ENCODE measurements at regions of chr2 and their contacts with region 1.

Region 1: DNA sequence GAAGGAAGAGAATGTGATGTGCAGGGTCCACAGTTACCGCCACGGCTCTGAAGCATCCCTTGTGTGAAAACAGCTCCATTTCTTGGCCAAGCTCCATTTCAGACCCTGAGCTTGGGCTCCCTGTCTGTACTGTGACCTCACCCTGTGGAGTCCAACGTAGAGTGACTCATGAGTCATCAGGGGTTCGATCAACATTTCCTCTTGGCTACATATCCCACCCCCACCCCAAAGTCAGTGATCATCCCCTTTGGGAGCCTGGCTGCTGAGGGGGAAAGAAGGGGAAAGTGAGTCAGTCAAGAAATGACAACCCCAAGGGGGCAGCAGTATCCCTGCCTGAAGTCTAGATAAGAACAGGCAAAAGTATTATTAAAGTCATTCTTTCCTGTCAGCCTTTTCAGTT is 62.2 kb downstream of the PAPOLG start:
- DNase-seq: peak in 2 of 9 donors; percentile 29 to 53
- ATAC-seq: no peak
- H3K4me3 ChIP-seq: no peak overlapping the region
- H3K4me3 Mint-ChIP-seq: peak overlapping the region in 2 of 10 donors; percentile 5 to 34
- H3K27ac ChIP-seq: no peak overlapping the region
- H3K27ac Mint-ChIP-seq: peak overlapping the region in 7 of 9 donors; percentile 28 to 92 (median 61)
- H3K4me1 ChIP-seq: peaks cover 24% of the 10 kb centered on the region in 2 donors
- H3K4me1 Mint-ChIP-seq: peaks cover 22 to 46% (median 37%) of the 10 kb centered on the region in 7 donors
- H3K27me3 ChIP-seq: no peaks in the 10 kb centered on the region
- H3K27me3 Mint-ChIP-seq: peaks cover 0 to 3% (median 0%) of the 10 kb centered on the region in 5 donors

Region 2: GRCh38 chr2:60794277-60794863 is 23.9 kb before region 1 on chr2:
- CTCF ChIA-PET with region 1: no interaction called
- POLR2A ChIA-PET with region 1: no interaction called
- intact Hi-C with region 1: loop called in 1 of 2 experiments (anchors 1 kb)
- DNase-seq: peak in 4 of 9 donors; percentile 20 to 44 (median 27)
- ATAC-seq: peak; percentile 64
- H3K4me3 ChIP-seq: no peak overlapping the region
- H3K4me3 Mint-ChIP-seq: no peak overlapping the region
- H3K27ac ChIP-seq: no peak overlapping the region
- H3K27ac Mint-ChIP-seq: peak overlapping the region in 2 of 9 donors; percentile 2 to 42
- H3K4me1 ChIP-seq: peaks cover 0 to 7% of the 10 kb centered on the region in 2 donors
- H3K4me1 Mint-ChIP-seq: peaks cover 0 to 16% (median 2%) of the 10 kb centered on the region in 7 donors
- H3K27me3 ChIP-seq: no peaks in the 10 kb centered on the region
- H3K27me3 Mint-ChIP-seq: no peaks in the 10 kb centered on the region

Region 3: DNA sequence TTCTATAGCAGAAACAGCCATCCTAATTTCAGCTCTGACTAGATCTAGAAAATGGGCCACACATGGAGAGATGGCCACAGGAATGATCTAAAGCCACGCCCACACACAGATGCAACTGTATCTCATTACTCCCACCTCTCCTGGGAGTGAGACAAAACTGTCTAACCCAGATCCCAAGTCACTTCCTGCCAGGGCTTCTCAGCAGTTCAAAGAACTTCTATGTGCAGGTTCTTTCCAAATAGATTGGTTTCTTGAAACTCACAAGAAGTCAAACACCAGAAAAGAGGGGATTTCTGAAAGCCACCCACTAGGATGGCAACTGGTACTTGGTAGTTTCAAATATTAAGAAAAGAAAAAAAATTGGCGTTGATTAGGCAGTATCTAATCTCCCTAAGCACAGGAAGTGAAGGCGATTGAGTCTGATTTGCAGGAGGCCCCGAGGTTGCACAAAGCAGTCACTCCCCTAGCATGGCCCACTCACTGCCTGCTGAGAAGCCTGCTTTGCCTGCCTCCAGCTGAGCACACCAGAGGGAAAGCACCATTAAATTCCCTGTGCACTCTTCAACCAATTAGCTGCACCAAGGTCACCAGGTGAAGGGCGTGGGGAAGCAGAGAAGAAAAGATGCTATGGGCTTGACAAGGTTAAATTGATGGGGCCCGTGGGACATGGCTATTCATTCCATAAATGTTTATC is 11.1 kb before region 1 on chr2:
- CTCF ChIA-PET with region 1: interaction called, 7 read pairs
- POLR2A ChIA-PET with region 1: interaction called, 7 read pairs
- intact Hi-C with region 1: loop called (anchors 1 kb)
- DNase-seq: peak in 5 of 9 donors; percentile 15 to 53 (median 20)
- ATAC-seq: peak; percentile 65
- H3K4me3 ChIP-seq: no peak overlapping the region
- H3K4me3 Mint-ChIP-seq: peak overlapping the region; percentile 15 to 73 (median 52)
- H3K27ac ChIP-seq: peak overlapping the region; percentile 57
- H3K27ac Mint-ChIP-seq: peak overlapping the region; percentile 7 to 88 (median 73)
- H3K4me1 ChIP-seq: peaks cover 19 to 23% of the 10 kb centered on the region in 2 donors
- H3K4me1 Mint-ChIP-seq: peaks cover 28 to 51% (median 44%) of the 10 kb centered on the region in 7 donors
- H3K27me3 ChIP-seq: no peaks in the 10 kb centered on the region
- H3K27me3 Mint-ChIP-seq: no peaks in the 10 kb centered on the region

Region 4: DNA sequence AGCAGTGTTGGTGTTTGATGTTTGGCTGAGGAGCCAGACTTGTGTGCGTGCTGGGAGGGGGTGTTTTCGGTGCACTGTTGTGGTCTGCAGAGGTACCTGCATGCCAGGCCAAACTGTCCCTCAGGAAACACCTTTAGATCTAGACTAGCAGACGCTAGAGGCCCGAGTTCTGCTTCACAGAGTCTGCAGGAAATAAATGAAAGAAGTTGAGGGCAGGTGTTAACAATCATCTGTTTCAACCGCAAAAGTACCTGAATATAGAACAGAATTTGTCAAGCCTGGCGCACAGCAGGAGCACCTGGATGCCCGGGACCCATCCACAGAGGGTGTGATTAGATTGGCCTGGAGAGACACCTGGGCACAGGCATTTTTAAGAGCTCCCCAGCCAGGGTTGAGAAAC is 22.6 kb after region 1 on chr2:
- CTCF ChIA-PET with region 1: interaction called, 3 read pairs
- POLR2A ChIA-PET with region 1: interaction called, 4 read pairs
- intact Hi-C with region 1: loop called in 1 of 2 experiments (anchors 1 kb)
- DNase-seq: peak in 3 of 9 donors; percentile 4 to 12 (median 12)
- ATAC-seq: peak; percentile 65
- H3K4me3 ChIP-seq: no peak overlapping the region
- H3K4me3 Mint-ChIP-seq: peak overlapping the region in 5 of 10 donors; percentile 11 to 57 (median 36)
- H3K27ac ChIP-seq: no peak overlapping the region
- H3K27ac Mint-ChIP-seq: peak overlapping the region in 6 of 9 donors; percentile 30 to 73 (median 57)
- H3K4me1 ChIP-seq: peaks cover 10% of the 10 kb centered on the region in 2 donors
- H3K4me1 Mint-ChIP-seq: peaks cover 10 to 23% (median 12%) of the 10 kb centered on the region in 7 donors
- H3K27me3 ChIP-seq: no peaks in the 10 kb centered on the region
- H3K27me3 Mint-ChIP-seq: no peaks in the 10 kb centered on the region

Region 5: GRCh38 chr2:60867848-60868247 is 49.6 kb after region 1 on chr2:
- CTCF ChIA-PET with region 1: no interaction called
- POLR2A ChIA-PET with region 1: interaction called, 3 read pairs
- intact Hi-C with region 1: loop called (anchors 1 kb)
- DNase-seq: peak in 7 of 9 donors; percentile 22 to 68 (median 51)
- ATAC-seq: peak; percentile 92
- H3K4me3 ChIP-seq: no peak overlapping the region
- H3K4me3 Mint-ChIP-seq: peak overlapping the region; percentile 36 to 81 (median 65)
- H3K27ac ChIP-seq: no peak overlapping the region
- H3K27ac Mint-ChIP-seq: peak overlapping the region; percentile 51 to 94 (median 85)
- H3K4me1 ChIP-seq: peaks cover 12 to 13% of the 10 kb centered on the region in 2 donors
- H3K4me1 Mint-ChIP-seq: peaks cover 17 to 25% (median 22%) of the 10 kb centered on the region in 7 donors
- H3K27me3 ChIP-seq: no peaks in the 10 kb centered on the region
- H3K27me3 Mint-ChIP-seq: no peaks in the 10 kb centered on the region

Region 6: DNA sequence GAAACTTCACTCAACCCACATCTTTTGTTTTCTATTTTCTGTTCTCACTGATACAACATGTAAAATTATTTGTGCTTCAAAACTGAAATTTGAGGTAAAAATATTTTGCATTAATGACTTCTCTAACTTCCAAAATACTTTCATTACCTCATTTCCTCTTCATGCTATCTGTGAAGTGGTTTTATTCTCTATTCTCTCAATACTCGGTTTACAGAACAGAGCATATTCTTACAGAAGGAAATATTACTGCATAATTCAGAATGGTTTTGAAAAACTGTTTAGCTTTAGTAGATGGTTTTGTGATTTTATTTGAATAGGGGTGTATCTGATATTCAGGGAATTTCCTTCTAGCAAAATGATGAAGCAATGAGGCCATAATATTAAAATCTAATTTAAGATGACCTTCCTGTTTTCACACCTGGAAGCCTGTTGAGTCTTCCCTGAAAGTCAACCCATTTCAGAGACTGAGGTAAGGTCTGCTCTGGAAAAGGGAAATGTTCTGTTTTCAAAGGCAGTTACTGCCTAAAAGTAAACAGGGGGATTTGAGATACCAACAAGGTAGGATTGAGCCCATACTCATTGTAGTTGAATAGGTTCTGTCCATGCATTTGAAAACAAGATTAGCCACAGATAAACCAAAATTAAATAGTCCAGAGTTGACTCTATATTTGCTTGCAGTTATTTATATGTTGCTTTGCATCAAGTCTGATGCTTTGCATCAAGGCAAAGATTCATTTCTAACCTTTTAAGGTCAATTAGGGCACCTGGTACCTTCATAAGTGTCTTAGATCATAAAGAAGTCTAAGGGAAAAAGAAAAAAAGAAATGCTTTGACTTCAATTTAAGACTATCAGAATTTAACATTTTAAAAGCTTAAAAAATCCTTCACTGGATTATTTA is 148.5 kb after region 1 on chr2:
- CTCF ChIA-PET with region 1: no interaction called
- POLR2A ChIA-PET with region 1: no interaction called
- intact Hi-C with region 1: loop called in 1 of 2 experiments (anchors 1 kb)
- DNase-seq: peak in 3 of 9 donors; percentile 7 to 23 (median 9)
- ATAC-seq: peak; percentile 29
- H3K4me3 ChIP-seq: no peak overlapping the region
- H3K4me3 Mint-ChIP-seq: peak overlapping the region; percentile 31 to 78 (median 64)
- H3K27ac ChIP-seq: no peak overlapping the region
- H3K27ac Mint-ChIP-seq: peak overlapping the region; percentile 22 to 80 (median 59)
- H3K4me1 ChIP-seq: peaks cover 22 to 28% of the 10 kb centered on the region in 2 donors
- H3K4me1 Mint-ChIP-seq: peaks cover 12 to 54% (median 43%) of the 10 kb centered on the region in 7 donors
- H3K27me3 ChIP-seq: no peaks in the 10 kb centered on the region
- H3K27me3 Mint-ChIP-seq: no peaks in the 10 kb centered on the region

Region 7: GRCh38 chr2:61016808-61017555 is 198.7 kb after region 1 on chr2:
- CTCF ChIA-PET with region 1: no interaction called
- POLR2A ChIA-PET with region 1: no interaction called
- intact Hi-C with region 1: loop called (anchors 1 kb)
- DNase-seq: peak; percentile 41 to 75 (median 72)
- ATAC-seq: peak; percentile 79
- H3K4me3 ChIP-seq: peak overlapping the region; percentile 100
- H3K4me3 Mint-ChIP-seq: peak overlapping the region; percentile 93 to 100 (median 97)
- H3K27ac ChIP-seq: peak overlapping the region; percentile 75
- H3K27ac Mint-ChIP-seq: peak overlapping the region; percentile 90 to 99 (median 95)
- H3K4me1 ChIP-seq: peaks cover 14 to 20% of the 10 kb centered on the region in 2 donors
- H3K4me1 Mint-ChIP-seq: peaks cover 23 to 68% (median 48%) of the 10 kb centered on the region in 7 donors
- H3K27me3 ChIP-seq: no peaks in the 10 kb centered on the region
- H3K27me3 Mint-ChIP-seq: no peaks in the 10 kb centered on the region

Region 8: DNA sequence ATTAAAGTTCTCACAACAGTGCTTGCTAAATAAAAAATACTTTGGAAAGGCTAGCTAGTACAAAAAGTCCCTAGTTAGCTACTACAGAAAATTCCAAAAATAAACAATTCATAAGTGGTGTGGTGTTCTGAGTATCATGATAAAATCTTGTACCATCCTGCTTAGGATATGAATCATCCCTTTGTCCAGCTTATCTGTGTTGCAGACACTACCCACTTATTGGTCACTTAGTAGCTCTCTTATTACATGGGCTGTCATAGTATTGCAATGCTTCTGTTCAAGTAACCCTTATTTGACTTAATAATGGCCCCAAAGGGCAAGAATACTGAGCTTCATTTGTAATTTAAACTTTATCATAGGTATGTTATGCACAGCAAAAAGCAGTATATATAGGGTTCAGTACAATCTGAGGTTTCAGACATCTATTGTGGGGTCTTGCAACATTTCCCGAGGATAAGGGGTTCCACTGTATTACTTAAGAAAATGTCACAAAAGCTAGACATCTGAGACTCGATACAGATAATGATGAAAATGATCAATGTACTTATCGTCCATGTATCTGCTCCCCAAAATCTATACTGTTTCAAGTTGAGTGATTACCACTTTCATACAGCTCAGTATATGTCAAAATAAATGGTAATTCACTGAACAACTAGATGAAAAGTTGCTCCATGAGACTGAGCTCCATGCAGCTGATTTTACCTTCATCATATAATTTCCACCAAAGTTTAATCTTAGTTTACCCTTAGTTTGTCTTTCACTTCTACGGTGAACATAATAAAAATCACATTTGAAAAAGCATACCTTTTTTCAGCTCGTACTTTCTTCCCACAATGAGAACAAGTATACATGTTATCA is 437.5 kb after region 1 on chr2:
- CTCF ChIA-PET with region 1: no interaction called
- POLR2A ChIA-PET with region 1: no interaction called
- intact Hi-C with region 1: no loop called
- DNase-seq: no peak
- ATAC-seq: peak; percentile 45
- H3K4me3 ChIP-seq: no peak overlapping the region
- H3K4me3 Mint-ChIP-seq: no peak overlapping the region
- H3K27ac ChIP-seq: no peak overlapping the region
- H3K27ac Mint-ChIP-seq: no peak overlapping the region
- H3K4me1 ChIP-seq: no peaks in the 10 kb centered on the region
- H3K4me1 Mint-ChIP-seq: peaks cover 0 to 6% (median 3%) of the 10 kb centered on the region in 7 donors
- H3K27me3 ChIP-seq: no peaks in the 10 kb centered on the region
- H3K27me3 Mint-ChIP-seq: no peaks in the 10 kb centered on the region

Region 9: GRCh38 chr2:62055724-62056336 is 1237.6 kb after region 1 on chr2:
- CTCF ChIA-PET with region 1: no interaction called
- POLR2A ChIA-PET with region 1: no interaction called
- intact Hi-C with region 1: no loop called
- DNase-seq: no peak
- ATAC-seq: no peak
- H3K4me3 ChIP-seq: no peak overlapping the region
- H3K4me3 Mint-ChIP-seq: no peak overlapping the region
- H3K27ac ChIP-seq: no peak overlapping the region
- H3K27ac Mint-ChIP-seq: no peak overlapping the region
- H3K4me1 ChIP-seq: peaks cover 0 to 9% of the 10 kb centered on the region in 2 donors
- H3K4me1 Mint-ChIP-seq: peaks cover 0 to 13% (median 5%) of the 10 kb centered on the region in 7 donors
- H3K27me3 ChIP-seq: no peaks in the 10 kb centered on the region
- H3K27me3 Mint-ChIP-seq: no peaks in the 10 kb centered on the region